CD8-positive, alpha-beta T cell (primary cell): ENCODE measurements at regions of chr16 and their contacts with region 1.

Region 1: GRCh38 chr16:17358846-17359245 is 111.9 kb downstream of the XYLT1 start:
- DNase-seq: no peak
- ATAC-seq: no peak
- H3K4me3 ChIP-seq: no peak overlapping the region
- H3K4me3 Mint-ChIP-seq: no peak overlapping the region
- H3K27ac ChIP-seq: peak overlapping the region in 1 of 2 experiments; percentile 59
- H3K27ac Mint-ChIP-seq: peak overlapping the region; percentile 97
- H3K4me1 ChIP-seq: peaks cover 58% of the 10 kb centered on the region
- H3K4me1 Mint-ChIP-seq: peaks cover 68% of the 10 kb centered on the region
- H3K27me3 ChIP-seq: no peaks in the 10 kb centered on the region
- H3K27me3 Mint-ChIP-seq: no peaks in the 10 kb centered on the region
- CTCF ChIP-seq: no peak

Region 2: DNA sequence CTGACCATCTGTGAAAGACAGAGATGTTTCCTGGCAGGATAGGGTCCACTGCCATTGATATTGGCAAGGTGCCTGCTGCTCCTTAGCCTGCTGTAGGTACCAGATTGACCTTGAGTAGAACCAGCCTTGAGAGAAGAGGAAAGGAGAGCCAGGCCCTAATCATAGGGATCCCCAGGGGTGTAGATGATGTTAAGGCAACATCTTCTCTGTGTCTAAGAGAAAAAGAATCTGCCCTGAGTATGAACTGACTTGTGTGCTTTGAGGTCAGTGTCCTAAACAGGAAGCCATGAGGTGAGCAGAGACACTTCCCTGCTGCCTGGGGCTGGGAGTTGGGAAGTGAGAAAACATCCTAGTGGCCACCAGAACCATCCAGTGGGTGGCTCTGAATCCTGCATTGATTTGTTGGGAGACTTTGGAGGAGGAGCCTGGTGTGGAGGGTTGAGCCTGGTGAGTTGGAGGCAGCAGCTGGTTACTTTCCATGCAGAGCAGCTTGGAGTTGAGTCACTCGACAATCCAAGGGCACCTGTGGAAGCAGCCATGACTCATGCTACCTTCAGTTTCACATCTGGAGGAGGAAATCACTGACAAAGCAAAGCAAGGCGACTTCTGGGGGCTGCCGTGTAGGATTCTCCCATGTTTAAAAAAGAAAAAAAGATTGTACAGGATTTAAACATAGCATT is 1876.6 kb before region 1 on chr16:
- CTCF ChIA-PET with region 1: no interaction called
- POLR2A ChIA-PET with region 1: no interaction called
- intact Hi-C with region 1: no loop called
- DNase-seq: no peak
- ATAC-seq: no peak
- H3K4me3 ChIP-seq: no peak overlapping the region
- H3K4me3 Mint-ChIP-seq: no peak overlapping the region
- H3K27ac ChIP-seq: no peak overlapping the region
- H3K27ac Mint-ChIP-seq: no peak overlapping the region
- H3K4me1 ChIP-seq: no peaks in the 10 kb centered on the region
- H3K4me1 Mint-ChIP-seq: no peaks in the 10 kb centered on the region
- H3K27me3 ChIP-seq: no peaks in the 10 kb centered on the region
- H3K27me3 Mint-ChIP-seq: no peaks in the 10 kb centered on the region
- CTCF ChIP-seq: no peak

Region 3: GRCh38 chr16:17409894-17410293 is 51.0 kb after region 1 on chr16:
- CTCF ChIA-PET with region 1: no interaction called
- POLR2A ChIA-PET with region 1: no interaction called
- intact Hi-C with region 1: loop called in 1 of 2 experiments (anchors 1 kb)
- DNase-seq: no peak
- ATAC-seq: no peak
- H3K4me3 ChIP-seq: no peak overlapping the region
- H3K4me3 Mint-ChIP-seq: no peak overlapping the region
- H3K27ac ChIP-seq: no peak overlapping the region
- H3K27ac Mint-ChIP-seq: no peak overlapping the region
- H3K4me1 ChIP-seq: no peaks in the 10 kb centered on the region
- H3K4me1 Mint-ChIP-seq: peaks cover 19% of the 10 kb centered on the region
- H3K27me3 ChIP-seq: no peaks in the 10 kb centered on the region
- H3K27me3 Mint-ChIP-seq: no peaks in the 10 kb centered on the region
- CTCF ChIP-seq: no peak